HCT116 (cell line): ENCODE measurements at regions of chr4 and their contacts with region 1.

Region 1: GRCh38 chr4:185183619-185184281 is 20.1 kb downstream of the CFAP97 start:
- DNase-seq: peak; percentile 78
- ATAC-seq: peak; percentile 84
- H3K4me3 ChIP-seq: no peak overlapping the region
- H3K27ac ChIP-seq: no peak overlapping the region
- H3K4me1 ChIP-seq: no peaks in the 10 kb centered on the region
- H3K27me3 ChIP-seq: no peaks in the 10 kb centered on the region
- CTCF ChIP-seq: peak; percentile 66 to 81 (median 81); a peak in 5 of 6 replicates
- POLR2A ChIP-seq: no peak
- RAD21 ChIP-seq: peak; percentile 78

Region 2: GRCh38 chr4:185005216-185005819 is 178.4 kb before region 1 on chr4:
- CTCF ChIA-PET with region 1: interaction called, 7 read pairs
- POLR2A ChIA-PET with region 1: no interaction called
- RAD21 ChIA-PET with region 1: no interaction called
- intact Hi-C with region 1: loop called (anchors 1 kb)
- DNase-seq: peak; percentile 72
- ATAC-seq: peak; percentile 97
- H3K4me3 ChIP-seq: peak overlapping the region; percentile 13 to 38
- H3K27ac ChIP-seq: no peak overlapping the region
- H3K4me1 ChIP-seq: peaks cover 3 to 7% of the 10 kb centered on the region in 2 experiments; a peak in 2 of 4 replicates
- H3K27me3 ChIP-seq: no peaks in the 10 kb centered on the region
- CTCF ChIP-seq: peak; percentile 89 to 95 (median 93)
- POLR2A ChIP-seq: no peak
- RAD21 ChIP-seq: peak; percentile 95

Region 3: DNA sequence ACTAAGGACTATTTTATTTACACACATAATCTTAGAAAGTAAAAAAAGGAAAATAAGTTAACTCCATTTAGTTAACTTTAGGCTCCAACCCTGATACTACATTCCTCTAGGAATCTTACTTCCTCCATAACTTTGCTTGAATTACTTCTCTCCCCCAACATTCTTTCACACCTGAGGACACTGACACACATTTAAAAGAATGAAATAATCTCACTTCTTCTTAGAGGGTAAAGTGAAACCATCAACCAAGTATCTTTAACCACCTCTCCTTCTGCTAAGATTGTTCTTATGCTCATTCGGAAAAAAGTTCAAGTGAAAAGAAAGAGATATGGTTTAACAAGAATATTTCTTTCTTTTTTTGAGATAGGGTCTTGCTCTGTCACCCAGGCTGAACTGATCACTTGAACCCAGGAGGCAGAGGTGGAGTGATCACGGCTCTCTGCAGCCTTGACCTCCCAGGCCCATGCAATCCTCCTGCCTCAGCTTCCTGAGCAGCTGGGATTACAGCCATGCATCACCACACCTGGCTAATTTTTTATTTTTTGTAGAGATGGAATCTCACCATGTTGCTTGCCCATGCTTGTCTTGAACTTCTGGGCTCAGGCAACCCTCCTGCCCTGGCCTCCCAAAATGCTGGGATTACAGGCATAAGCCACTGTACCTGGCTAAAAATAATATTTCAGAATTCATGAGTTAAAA is 12.2 kb before region 1 on chr4:
- CTCF ChIA-PET with region 1: interaction called, 18 read pairs
- POLR2A ChIA-PET with region 1: no interaction called
- RAD21 ChIA-PET with region 1: no interaction called
- intact Hi-C with region 1: no loop called
- DNase-seq: no peak
- ATAC-seq: no peak
- H3K4me3 ChIP-seq: no peak overlapping the region
- H3K27ac ChIP-seq: no peak overlapping the region
- H3K4me1 ChIP-seq: no peaks in the 10 kb centered on the region; a peak in 1 of 4 replicates
- H3K27me3 ChIP-seq: no peaks in the 10 kb centered on the region
- CTCF ChIP-seq: no peak
- POLR2A ChIP-seq: no peak
- RAD21 ChIP-seq: no peak

Region 4: GRCh38 chr4:185196437-185196836 is 12.7 kb after region 1 on chr4:
- CTCF ChIA-PET with region 1: interaction called, 16 read pairs
- POLR2A ChIA-PET with region 1: interaction called, 4 read pairs
- RAD21 ChIA-PET with region 1: no interaction called
- intact Hi-C with region 1: no loop called
- DNase-seq: peak; percentile 60
- ATAC-seq: peak; percentile 82
- H3K4me3 ChIP-seq: peak overlapping the region in 1 of 2 experiments; percentile 7; a peak in 1 of 4 replicates
- H3K27ac ChIP-seq: peak overlapping the region; percentile 70
- H3K4me1 ChIP-seq: peaks cover 58 to 64% of the 10 kb centered on the region in 2 experiments
- H3K27me3 ChIP-seq: no peaks in the 10 kb centered on the region
- CTCF ChIP-seq: no peak
- POLR2A ChIP-seq: no peak
- RAD21 ChIP-seq: 0 out of 2 replicates have a peak, but pooled peaks have one; percentile 5

Region 5: GRCh38 chr4:185425647-185426352 is 242.1 kb after region 1 on chr4 and contains the start of gene UFSP2:
- CTCF ChIA-PET with region 1: no interaction called
- POLR2A ChIA-PET with region 1: no interaction called
- RAD21 ChIA-PET with region 1: no interaction called
- intact Hi-C with region 1: no loop called
- DNase-seq: peak; percentile 87
- ATAC-seq: peak; percentile 90
- H3K4me3 ChIP-seq: peak within 1 kb of the TSS; percentile 95
- H3K27ac ChIP-seq: peak within 1 kb of the TSS; percentile 64
- H3K4me1 ChIP-seq: peaks cover 3 to 16% of the 10 kb centered on the region in 2 experiments; a peak in 3 of 4 replicates
- H3K27me3 ChIP-seq: no peaks in the 10 kb centered on the region
- CTCF ChIP-seq: no peak
- POLR2A ChIP-seq: no peak
- RAD21 ChIP-seq: no peak
- total RNA-seq, gene UFSP2: 29.4 TPM

Region 6: DNA sequence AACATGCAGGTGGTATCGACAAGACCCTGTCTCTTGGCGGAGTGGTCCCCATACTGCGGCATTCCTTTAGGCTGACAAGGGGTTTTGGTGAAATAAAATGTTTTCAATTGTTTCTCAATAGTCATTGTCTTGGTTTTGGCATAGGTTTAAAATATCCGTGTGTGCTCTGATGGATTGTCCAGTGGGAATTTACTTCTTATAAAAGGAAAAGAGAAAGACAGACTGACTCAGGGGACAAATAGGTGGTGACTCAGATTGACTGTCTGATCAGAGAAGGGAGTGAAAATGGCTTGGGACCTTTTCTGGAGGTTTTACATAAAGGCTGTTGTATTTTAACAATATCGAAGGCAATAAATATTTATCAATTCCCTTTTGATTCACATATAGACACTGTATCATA is 498.5 kb after region 1 on chr4:
- CTCF ChIA-PET with region 1: no interaction called
- POLR2A ChIA-PET with region 1: no interaction called
- RAD21 ChIA-PET with region 1: no interaction called
- intact Hi-C with region 1: no loop called
- DNase-seq: no peak
- ATAC-seq: no peak
- H3K4me3 ChIP-seq: no peak overlapping the region
- H3K27ac ChIP-seq: no peak overlapping the region
- H3K4me1 ChIP-seq: no peaks in the 10 kb centered on the region
- H3K27me3 ChIP-seq: no peaks in the 10 kb centered on the region
- CTCF ChIP-seq: no peak
- POLR2A ChIP-seq: no peak
- RAD21 ChIP-seq: no peak